Pancreas (tissue), 10 donors: ENCODE measurements at regions of chr10 and their contacts with region 1.

Region 1: GRCh38 chr10:95246579-95247051 is 44.2 kb downstream of the PDLIM1 start:
- DNase-seq: peak in 5 of 6 donors; percentile 38 to 82 (median 65)
- ATAC-seq: peak; percentile 52 to 82 (median 72)
- H3K4me3 ChIP-seq: no peak overlapping the region
- H3K27ac ChIP-seq: peak overlapping the region in 2 of 4 donors; percentile 39 to 46
- H3K4me1 ChIP-seq: peaks cover 0 to 12% (median 0%) of the 10 kb centered on the region in 3 donors
- H3K27me3 ChIP-seq: no peaks in the 10 kb centered on the region
- CTCF ChIP-seq: peak; percentile 60 to 83 (median 79)

Region 2: GRCh38 chr10:95121904-95122303 is 124.7 kb before region 1 on chr10:
- intact Hi-C with region 1: loop called in 1 of 3 experiments (anchors 10 kb)
- DNase-seq: peak in 5 of 6 donors; percentile 18 to 58 (median 40)
- ATAC-seq: peak; percentile 64 to 83 (median 78)
- H3K4me3 ChIP-seq: no peak overlapping the region
- H3K27ac ChIP-seq: no peak overlapping the region
- H3K4me1 ChIP-seq: no peaks in the 10 kb centered on the region
- H3K27me3 ChIP-seq: no peaks in the 10 kb centered on the region
- CTCF ChIP-seq: no peak

Region 3: DNA sequence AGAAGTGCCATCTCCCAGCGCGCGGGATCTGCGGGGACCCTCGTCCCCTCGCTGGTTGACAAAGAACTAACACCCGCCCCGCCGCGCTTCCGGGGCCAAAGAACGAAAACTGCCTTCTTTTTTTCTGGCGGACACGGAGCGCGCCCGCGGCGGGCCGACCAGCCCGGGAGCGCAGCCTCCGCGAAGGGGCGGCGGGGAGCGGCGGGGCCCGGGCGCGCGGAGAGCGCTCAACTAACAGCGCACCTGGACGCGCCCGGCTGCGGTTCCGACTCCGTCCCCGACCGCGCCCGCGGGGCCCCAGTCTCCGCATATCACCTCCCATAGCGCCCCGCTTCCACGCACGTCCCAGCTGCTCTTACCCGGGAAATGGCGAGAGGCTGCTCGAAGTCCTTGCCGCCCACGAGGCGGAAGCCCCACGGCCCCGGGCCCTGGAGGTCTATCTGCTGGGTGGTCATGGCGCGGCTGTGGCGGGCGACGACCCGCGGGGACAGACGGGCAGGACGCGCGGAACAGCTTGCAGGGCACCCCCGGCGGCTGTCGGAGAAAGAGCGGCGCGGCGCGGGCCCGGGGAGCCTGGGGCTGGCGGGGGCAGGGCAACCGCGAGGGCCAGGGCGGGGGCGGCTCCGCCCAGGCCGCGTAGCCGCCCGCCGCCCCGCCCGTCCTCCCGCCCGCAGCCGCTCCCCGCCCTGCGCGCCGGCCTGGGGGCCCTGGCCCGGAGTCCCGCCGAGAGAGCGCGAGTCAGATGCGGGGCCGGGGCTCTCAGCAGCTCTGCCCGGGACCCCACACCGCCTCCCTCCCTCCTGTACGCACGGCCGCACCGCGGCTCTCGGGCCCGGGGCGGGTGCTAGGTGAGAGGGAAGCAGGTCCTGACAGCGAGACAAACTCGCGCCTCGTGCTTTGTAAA is 44.1 kb after region 1 on chr10 and contains the start of gene PDLIM1:
- intact Hi-C with region 1: no loop called
- DNase-seq: peak; percentile 76 to 96 (median 82)
- ATAC-seq: peak; percentile 88 to 92 (median 88)
- H3K4me3 ChIP-seq: peak within 1 kb of the TSS; percentile 80 to 98 (median 90)
- H3K27ac ChIP-seq: peak within 1 kb of the TSS; percentile 63 to 87 (median 76)
- H3K4me1 ChIP-seq: peaks cover 7 to 12% (median 8%) of the 10 kb centered on the region in 3 donors
- H3K27me3 ChIP-seq: no peaks in the 10 kb centered on the region
- CTCF ChIP-seq: peak in 1 of 4 donors; percentile 21
- total RNA-seq, gene PDLIM1: 44.1 to 120 (median 53.1) TPM

Region 4: GRCh38 chr10:95355301-95355700 is 108.7 kb after region 1 on chr10:
- intact Hi-C with region 1: loop called in 2 of 3 experiments (anchors 5 to 10 kb)
- DNase-seq: no peak
- ATAC-seq: no peak
- H3K4me3 ChIP-seq: no peak overlapping the region
- H3K27ac ChIP-seq: no peak overlapping the region
- H3K4me1 ChIP-seq: peaks cover 10 to 14% (median 13%) of the 10 kb centered on the region in 3 donors
- H3K27me3 ChIP-seq: no peaks in the 10 kb centered on the region
- CTCF ChIP-seq: no peak

Region 5: GRCh38 chr10:95363303-95363912 is 116.8 kb after region 1 on chr10:
- intact Hi-C with region 1: loop called (anchors 2 to 10 kb)
- DNase-seq: peak in 3 of 6 donors; percentile 28 to 57 (median 29)
- ATAC-seq: peak; percentile 77 to 91 (median 86)
- H3K4me3 ChIP-seq: no peak overlapping the region
- H3K27ac ChIP-seq: no peak overlapping the region
- H3K4me1 ChIP-seq: no peaks in the 10 kb centered on the region
- H3K27me3 ChIP-seq: no peaks in the 10 kb centered on the region
- CTCF ChIP-seq: peak; percentile 51 to 85 (median 78)